AG04449 (cell line): ENCODE measurements at regions of chr19 and their contacts with region 1.

Region 1: GRCh38 chr19:35066691-35067563 is 25.4 kb downstream of the HPN start:
- DNase-seq: no peak
- H3K4me3 ChIP-seq: no peak overlapping the region
- CTCF ChIP-seq: peak; percentile 93

Region 2: DNA sequence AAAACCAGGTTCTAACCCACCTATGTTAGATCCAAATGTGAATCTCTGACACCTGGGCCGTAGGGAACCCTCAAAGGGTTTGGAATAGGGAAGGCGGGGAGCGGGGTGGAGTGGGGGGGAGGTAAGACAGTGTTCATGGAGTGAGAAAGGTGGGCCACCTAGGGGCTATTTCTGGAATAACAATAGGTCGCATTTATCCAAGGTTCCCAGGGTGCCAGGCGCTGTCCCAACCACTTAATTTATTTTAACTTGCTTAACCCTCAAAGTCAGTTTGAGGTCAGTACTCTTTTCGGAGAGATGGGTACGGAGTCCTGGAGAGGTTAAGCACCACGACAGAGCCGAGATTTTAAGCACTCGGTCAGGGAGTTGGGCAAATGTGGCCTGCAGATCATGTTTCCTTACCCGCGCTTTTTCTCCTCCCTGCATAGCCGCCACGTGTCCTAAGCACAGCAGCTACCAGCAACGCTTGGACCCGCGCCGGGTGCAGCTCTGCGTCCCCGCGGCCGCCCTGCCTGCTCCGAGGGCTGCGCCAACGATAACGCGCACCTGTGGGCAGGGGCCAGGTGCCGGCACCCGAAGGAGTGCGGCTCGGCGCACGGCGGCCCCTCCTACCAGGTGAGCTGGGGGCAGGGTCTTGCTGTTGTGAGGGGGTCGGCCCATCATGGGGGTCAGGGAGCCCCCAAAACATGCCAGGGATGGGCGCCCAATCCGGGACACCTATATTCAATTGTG is 23.7 kb after region 1 on chr19:
- CTCF ChIA-PET with region 1: interaction called, 89 read pairs
- POLR2A ChIA-PET with region 1: no interaction called
- DNase-seq: no peak
- H3K4me3 ChIP-seq: no peak overlapping the region
- CTCF ChIP-seq: peak; percentile 41

Region 3: DNA sequence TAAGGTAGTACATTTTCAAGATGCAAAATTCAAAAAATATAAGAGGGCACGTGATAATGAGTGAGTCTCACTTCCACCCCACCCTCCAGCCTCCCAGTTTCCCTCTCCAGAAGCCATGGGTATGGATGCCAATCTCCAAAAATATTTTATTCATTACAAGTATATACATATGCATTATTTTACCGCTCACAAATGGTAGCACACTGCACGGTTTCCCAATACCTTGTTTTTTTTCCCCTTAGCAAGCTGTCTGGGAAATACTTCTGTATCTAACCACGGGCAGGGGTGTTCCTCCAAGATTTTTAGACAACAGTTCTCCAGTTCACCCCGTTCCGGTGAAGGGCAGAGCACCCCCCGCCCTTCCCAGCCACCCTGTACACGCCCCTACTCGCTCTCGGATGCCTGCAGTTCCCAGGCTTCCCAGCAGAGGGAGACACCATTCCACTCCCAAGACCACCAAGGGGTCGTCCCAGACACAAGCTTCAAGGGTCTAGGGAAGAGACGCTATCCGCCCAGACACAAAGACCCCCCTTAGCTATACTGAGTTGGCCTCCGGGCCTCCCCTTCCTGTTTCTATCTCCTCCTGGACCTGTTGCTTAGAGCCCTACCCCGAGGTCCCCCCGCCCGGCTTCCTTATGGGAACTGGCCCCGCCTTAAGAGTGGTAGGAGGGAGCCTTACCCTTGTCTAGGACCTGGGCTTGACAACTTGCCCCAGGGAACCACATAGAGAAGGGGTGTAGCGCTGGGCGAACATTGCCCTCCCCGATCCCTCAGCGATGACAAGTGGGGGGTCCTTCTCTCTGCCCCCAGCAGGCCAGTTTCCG is 47.6 kb after region 1 on chr19:
- CTCF ChIA-PET with region 1: interaction called, 23 read pairs
- POLR2A ChIA-PET with region 1: no interaction called
- DNase-seq: no peak
- H3K4me3 ChIP-seq: peak overlapping the region; percentile 6; the same call in 1 of the 2 replicates
- CTCF ChIP-seq: peak; percentile 96

Region 4: GRCh38 chr19:35135389-35135909 is 68.5 kb after region 1 on chr19:
- CTCF ChIA-PET with region 1: interaction called, 245 read pairs
- POLR2A ChIA-PET with region 1: no interaction called
- DNase-seq: no peak
- H3K4me3 ChIP-seq: no peak overlapping the region
- CTCF ChIP-seq: peak; percentile 92